GM10248 (cell line): ENCODE measurements at regions of chr2 and their contacts with region 1.

Region 1: GRCh38 chr2:179020156-179020750 is 29.7 kb downstream of the CCDC141 start:
- DNase-seq: peak; percentile 23
- CTCF ChIP-seq: peak; percentile 65

Region 2: DNA sequence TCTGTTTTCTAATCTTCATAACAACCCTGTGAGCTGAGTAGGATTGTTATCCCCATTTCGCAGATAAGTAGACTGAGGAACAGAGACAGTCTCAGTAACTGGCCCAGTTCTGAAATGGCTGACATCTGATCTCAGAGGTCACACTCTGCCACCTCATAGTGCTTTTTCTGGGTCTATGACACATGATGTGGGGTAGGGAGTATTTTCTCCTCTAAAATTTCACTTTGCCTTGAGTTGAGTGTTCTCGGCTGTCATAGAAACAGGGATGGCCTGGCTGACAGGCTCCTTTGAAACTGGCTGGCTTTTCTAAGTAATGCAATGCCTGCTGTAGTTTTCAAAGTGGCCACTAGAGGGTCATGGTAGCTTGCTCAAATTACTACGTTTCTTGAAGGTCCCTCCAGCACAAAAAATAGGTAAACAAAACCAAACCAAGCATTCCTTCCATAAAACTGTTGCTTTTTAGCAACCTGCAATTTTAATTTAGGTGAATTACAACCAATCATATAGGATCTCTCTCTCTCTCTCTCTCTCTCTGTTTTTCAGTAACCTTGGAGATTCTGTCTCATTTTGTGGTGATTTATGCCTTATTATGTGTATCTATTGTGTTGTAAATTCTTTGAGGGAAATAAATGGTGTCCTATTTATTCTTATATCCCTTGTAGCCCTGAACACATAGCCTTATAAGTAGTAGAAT is 128.8 kb before region 1 on chr2:
- CTCF ChIA-PET with region 1: interaction called, 28 read pairs
- POLR2A ChIA-PET with region 1: no interaction called
- DNase-seq: peak; percentile 34
- CTCF ChIP-seq: peak; percentile 84

Region 3: GRCh38 chr2:179005976-179006375 is 14.3 kb before region 1 on chr2:
- CTCF ChIA-PET with region 1: interaction called, 22 read pairs
- POLR2A ChIA-PET with region 1: no interaction called
- DNase-seq: no peak
- CTCF ChIP-seq: no peak

Region 4: DNA sequence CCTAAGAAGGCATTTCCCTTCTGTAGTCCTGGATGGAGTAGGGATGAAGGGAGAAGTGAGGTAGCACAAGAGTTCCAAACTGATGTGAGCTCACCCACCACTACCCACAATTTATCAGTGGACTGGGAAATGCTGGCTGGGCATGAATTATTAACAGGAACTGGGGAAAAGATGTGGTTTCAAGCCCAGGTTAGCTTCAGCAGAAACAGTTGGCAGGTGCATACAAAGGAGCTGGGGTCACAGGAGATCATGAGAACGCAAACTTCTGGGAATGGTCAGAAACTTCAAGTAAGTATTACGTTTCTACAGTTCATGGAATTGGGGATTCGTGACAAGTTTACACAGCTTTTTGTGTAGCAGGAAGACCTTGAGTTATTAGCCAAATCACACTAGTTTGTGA is 24.2 kb after region 1 on chr2:
- CTCF ChIA-PET with region 1: interaction called, 19 read pairs
- POLR2A ChIA-PET with region 1: no interaction called
- DNase-seq: no peak
- CTCF ChIP-seq: no peak